Activated naive CD4-positive, alpha-beta T cell treated with anti-CD3 and anti-CD28 coated beads for 36 hours (primary cell): ENCODE measurements at regions of chr2 and their contacts with region 1.

Region 1: GRCh38 chr2:206765242-206766056 is at the starts of genes FASTKD2 and MDH1B:
- DNase-seq: peak; percentile 91
- H3K4me3 Mint-ChIP-seq: peak within 1 kb of the TSS; percentile 89
- H3K27ac Mint-ChIP-seq: peak within 1 kb of the TSS; percentile 95
- H3K4me1 Mint-ChIP-seq: peaks cover 35% of the 10 kb centered on the region
- H3K27me3 Mint-ChIP-seq: no peaks in the 10 kb centered on the region
- total RNA-seq, gene FASTKD2: 21.4 to 22.8 TPM
- total RNA-seq, gene MDH1B: 0.86 TPM

Region 2: GRCh38 chr2:206085742-206086445 is 679.6 kb before region 1 on chr2 and contains the start of gene INO80D:
- CTCF ChIA-PET with region 1: no interaction called
- intact Hi-C with region 1: loop called (anchors 5 kb)
- DNase-seq: peak; percentile 86
- H3K4me3 Mint-ChIP-seq: peak within 1 kb of the TSS; percentile 97
- H3K27ac Mint-ChIP-seq: peak within 1 kb of the TSS; percentile 100
- H3K4me1 Mint-ChIP-seq: peaks cover 35% of the 10 kb centered on the region
- H3K27me3 Mint-ChIP-seq: no peaks in the 10 kb centered on the region
- total RNA-seq, gene INO80D: 14.8 to 15.0 TPM

Region 3: DNA sequence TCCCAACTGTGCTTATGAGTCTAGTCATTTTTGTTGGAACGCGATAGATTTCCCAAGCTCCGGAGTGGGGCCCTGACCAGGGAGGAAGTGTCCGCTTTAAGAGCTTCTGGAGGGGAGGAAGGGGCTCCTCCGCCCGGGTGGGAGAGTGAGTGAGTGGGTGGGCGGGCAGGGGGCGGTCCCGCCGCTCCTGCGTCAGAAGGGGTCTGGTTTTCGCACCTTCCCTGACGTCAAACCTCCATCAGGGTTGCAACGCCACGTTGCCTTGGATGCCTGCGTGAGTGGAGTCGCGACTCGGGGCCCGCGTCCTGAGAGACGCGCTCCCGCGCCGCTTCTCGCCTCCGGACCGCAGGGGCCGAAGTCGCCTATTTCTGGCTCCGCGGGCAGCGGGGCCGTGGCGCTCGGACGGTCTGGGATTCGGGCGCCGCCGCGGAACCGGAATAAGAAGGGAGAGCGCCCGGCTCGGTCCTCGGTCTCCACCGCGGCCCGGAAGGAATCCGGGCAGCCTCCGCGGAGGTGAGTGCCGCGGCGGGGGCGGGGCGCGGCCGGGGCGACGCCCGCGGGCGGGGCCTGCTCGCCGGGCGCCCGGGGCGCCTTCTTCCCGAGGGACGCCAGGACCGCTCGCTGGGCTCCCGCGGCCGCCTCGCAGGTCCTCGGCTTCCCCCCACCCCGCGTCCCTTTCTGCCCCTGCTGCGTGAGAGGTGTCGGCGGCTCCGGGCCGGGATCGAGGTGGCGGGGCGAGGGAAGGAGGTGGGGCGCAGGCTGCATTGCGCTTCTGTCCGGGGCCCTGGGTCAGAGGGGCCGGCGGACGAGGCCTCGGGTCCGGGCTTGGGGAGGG is 490.8 kb before region 1 on chr2 and contains the start of gene ZDBF2:
- CTCF ChIA-PET with region 1: no interaction called
- intact Hi-C with region 1: loop called (anchors 10 kb)
- DNase-seq: peak; percentile 45
- H3K4me3 Mint-ChIP-seq: peak within 1 kb of the TSS; percentile 82
- H3K27ac Mint-ChIP-seq: peak within 1 kb of the TSS; percentile 63
- H3K4me1 Mint-ChIP-seq: peaks cover 11% of the 10 kb centered on the region
- H3K27me3 Mint-ChIP-seq: peaks cover 38% of the 10 kb centered on the region
- total RNA-seq, gene ZDBF2: 3.9 to 4.8 TPM

Region 4: GRCh38 chr2:206379266-206379665 is 386.2 kb before region 1 on chr2:
- CTCF ChIA-PET with region 1: no interaction called
- intact Hi-C with region 1: no loop called
- DNase-seq: no peak
- H3K4me3 Mint-ChIP-seq: no peak overlapping the region
- H3K27ac Mint-ChIP-seq: no peak overlapping the region
- H3K4me1 Mint-ChIP-seq: no peaks in the 10 kb centered on the region
- H3K27me3 Mint-ChIP-seq: no peaks in the 10 kb centered on the region

Region 5: GRCh38 chr2:206783718-206784117 is 18.3 kb after region 1 on chr2:
- CTCF ChIA-PET with region 1: interaction called, 16 read pairs
- intact Hi-C with region 1: loop called (anchors 1 kb)
- DNase-seq: no peak
- H3K4me3 Mint-ChIP-seq: no peak overlapping the region
- H3K27ac Mint-ChIP-seq: no peak overlapping the region
- H3K4me1 Mint-ChIP-seq: peaks cover 25% of the 10 kb centered on the region
- H3K27me3 Mint-ChIP-seq: no peaks in the 10 kb centered on the region

Region 6: DNA sequence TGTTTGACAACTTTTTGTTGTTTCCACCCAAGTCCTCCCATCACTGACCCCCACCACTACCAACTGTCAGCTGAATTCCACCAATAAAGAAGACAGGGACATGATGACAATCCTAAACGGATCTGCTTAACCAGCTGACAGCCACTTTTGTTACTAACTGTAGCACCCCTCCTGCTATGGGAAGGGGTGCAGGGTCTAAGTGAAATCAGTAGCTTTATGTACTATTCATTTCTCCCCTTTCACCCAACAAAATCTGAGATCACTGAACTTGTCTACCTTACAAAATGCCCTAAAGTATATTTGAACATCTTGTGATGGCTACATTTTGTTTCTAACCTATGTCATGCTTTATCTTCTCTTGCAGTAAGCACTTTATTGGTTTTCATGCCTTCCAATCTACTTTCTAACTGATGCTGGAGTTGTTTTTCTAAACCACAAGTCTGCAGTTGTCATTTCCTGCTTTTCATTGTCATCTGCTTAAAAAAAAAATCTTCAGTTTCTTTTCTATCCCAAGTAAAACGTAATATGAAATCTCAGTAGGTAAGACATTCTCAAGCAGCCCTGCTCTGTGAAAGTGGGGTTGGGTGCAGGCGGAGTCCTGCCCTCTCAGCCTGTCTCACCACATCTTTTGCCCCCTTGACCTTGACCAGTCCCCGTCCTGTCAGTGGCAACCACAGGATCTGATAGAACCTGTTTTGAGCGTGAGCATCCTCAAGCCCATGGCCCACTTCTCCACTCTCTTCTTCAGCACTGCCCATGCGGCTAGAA is 93.7 kb after region 1 on chr2:
- CTCF ChIA-PET with region 1: no interaction called
- intact Hi-C with region 1: loop called (anchors 1 kb)
- DNase-seq: peak; percentile 31
- H3K4me3 Mint-ChIP-seq: peak overlapping the region; percentile 45
- H3K27ac Mint-ChIP-seq: peak overlapping the region; percentile 71
- H3K4me1 Mint-ChIP-seq: peaks cover 19% of the 10 kb centered on the region
- H3K27me3 Mint-ChIP-seq: no peaks in the 10 kb centered on the region

Region 7: DNA sequence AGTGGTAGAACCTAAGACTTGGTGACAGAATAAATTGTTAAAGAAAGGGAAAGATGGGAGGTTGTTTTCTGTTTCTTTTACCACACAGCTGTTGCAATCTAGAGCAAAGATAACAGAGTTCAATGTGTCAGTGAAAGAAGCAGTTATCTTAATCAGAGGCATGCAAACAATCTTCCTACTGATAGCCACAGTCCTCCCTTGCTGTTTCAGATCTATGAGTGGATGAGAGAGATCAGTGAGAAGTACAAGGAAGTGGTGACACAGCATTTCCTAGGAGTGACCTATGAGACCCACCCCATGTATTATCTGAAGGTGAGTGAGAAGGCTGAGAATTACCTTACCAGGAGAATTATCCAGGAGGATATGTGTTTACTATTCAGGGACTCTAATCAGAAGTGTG is 189.8 kb after region 1 on chr2:
- CTCF ChIA-PET with region 1: no interaction called
- intact Hi-C with region 1: no loop called
- DNase-seq: no peak
- H3K4me3 Mint-ChIP-seq: no peak overlapping the region
- H3K27ac Mint-ChIP-seq: no peak overlapping the region
- H3K4me1 Mint-ChIP-seq: no peaks in the 10 kb centered on the region
- H3K27me3 Mint-ChIP-seq: no peaks in the 10 kb centered on the region

Region 8: GRCh38 chr2:207188626-207189419 is 423.4 kb after region 1 on chr2:
- CTCF ChIA-PET with region 1: no interaction called
- intact Hi-C with region 1: no loop called
- DNase-seq: no peak
- H3K4me3 Mint-ChIP-seq: no peak overlapping the region
- H3K27ac Mint-ChIP-seq: no peak overlapping the region
- H3K4me1 Mint-ChIP-seq: peaks cover 8% of the 10 kb centered on the region
- H3K27me3 Mint-ChIP-seq: no peaks in the 10 kb centered on the region

Region 9: DNA sequence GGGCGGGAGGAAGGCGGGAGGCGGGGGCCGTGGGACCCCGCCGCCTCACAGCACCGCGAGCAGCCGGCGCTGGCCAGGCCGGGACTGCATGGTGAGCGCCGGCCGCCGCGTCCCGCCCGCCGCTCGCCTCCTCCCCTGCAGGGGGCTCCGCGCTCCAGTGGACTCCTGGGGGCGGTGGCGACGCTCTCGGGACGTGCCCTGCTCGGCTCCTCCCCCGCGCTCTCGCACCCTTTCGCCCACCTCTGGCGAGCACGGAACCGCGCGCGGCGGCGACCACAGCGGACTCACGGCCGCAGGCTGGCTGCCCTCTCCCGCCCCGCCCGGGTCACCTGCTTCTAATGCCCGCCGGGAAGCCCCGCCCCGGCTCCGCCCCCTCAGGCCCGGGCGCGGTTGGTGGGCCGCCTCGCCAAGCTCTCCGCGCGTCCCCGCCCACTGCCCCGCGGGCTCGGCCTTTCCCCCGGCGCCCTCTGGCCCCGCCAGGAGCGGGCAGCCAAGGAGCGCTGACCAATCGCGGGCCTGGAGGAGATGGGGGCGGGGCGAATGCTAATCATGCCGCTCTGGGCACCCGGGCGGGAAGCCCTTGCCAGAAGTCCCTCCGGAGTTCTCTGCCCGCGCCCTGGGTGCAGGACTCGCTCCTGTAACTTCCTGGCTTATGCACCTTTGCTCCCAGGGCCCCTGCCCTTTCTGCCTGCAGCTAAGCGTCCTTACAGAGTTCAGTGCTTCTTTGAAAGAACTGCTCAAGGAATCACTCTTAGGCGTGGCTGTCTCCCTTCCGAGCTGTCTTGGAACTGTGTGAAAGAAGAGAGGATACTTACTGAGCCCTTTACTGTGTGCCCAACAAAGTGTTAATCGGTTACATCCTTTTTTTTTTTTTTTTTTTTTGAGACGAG is 1004.4 kb after region 1 on chr2 and contains the start of gene FZD5:
- CTCF ChIA-PET with region 1: no interaction called
- intact Hi-C with region 1: loop called (anchors 1 kb)
- DNase-seq: peak; percentile 91
- H3K4me3 Mint-ChIP-seq: peak within 1 kb of the TSS; percentile 80
- H3K27ac Mint-ChIP-seq: no peak within 1 kb of the TSS
- H3K4me1 Mint-ChIP-seq: peaks cover 31% of the 10 kb centered on the region
- H3K27me3 Mint-ChIP-seq: peaks cover 36% of the 10 kb centered on the region
- total RNA-seq, gene FZD5: 1.5 to 1.7 TPM